ENCODE measurements at regions of chr22 and their contacts with region 1.

Region 1: DNA sequence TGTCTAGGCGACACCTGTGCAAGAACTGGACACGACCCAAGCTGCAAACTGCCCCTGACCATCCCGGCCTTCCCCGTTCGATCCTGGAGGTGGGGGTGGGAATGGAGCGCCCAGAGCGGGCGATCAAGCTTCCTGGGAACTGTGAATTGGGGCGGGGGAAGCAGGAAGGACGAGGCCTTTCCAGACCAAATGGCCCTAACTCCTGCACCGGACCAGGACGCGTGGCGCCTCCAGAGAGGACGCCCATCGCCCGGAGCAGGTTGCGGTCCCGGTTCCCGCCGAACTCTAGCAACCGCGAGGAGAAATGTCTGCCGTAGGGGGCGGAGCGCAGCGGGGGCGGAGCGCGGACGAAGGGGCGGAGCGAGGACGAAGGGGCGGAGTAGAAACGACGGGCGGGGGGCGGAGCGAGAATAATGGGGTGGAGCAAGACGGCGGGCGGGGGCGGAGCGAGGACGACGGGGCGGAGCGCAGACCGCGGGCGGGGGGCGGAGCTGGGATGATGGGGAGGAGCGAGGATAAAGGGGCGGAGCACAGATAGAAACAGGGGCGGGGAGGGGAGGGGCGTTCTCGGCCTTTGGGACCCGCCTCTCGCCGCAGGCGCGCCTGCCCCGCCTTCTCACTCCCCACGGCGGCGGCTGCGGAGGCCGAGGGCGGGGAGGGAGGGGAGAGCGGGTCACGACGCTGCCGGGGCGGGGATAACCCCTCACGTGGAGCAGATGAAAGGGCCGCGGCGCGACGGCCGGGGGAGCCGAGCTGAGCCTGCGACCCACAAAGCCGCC is at the start of gene ZNRF3:
- DNase-seq: peak; percentile 79 to 95 (median 92)
- ATAC-seq: peak; percentile 94
- H3K4me3 ChIP-seq: peak within 1 kb of the TSS; percentile 52 to 77
- H3K4me3 Mint-ChIP-seq: peak within 1 kb of the TSS; percentile 87
- H3K27ac ChIP-seq: no peak within 1 kb of the TSS
- H3K27ac Mint-ChIP-seq: no peak within 1 kb of the TSS
- H3K4me1 ChIP-seq: peaks cover 13% of the 10 kb centered on the region
- H3K4me1 Mint-ChIP-seq: peaks cover 23% of the 10 kb centered on the region
- H3K27me3 ChIP-seq: peaks cover 5 to 9% of the 10 kb centered on the region in 2 experiments
- H3K27me3 Mint-ChIP-seq: peaks cover 27% of the 10 kb centered on the region
- CTCF ChIP-seq: no peak
- total RNA-seq, gene ZNRF3: 0.49 to 0.69 TPM

Region 2: DNA sequence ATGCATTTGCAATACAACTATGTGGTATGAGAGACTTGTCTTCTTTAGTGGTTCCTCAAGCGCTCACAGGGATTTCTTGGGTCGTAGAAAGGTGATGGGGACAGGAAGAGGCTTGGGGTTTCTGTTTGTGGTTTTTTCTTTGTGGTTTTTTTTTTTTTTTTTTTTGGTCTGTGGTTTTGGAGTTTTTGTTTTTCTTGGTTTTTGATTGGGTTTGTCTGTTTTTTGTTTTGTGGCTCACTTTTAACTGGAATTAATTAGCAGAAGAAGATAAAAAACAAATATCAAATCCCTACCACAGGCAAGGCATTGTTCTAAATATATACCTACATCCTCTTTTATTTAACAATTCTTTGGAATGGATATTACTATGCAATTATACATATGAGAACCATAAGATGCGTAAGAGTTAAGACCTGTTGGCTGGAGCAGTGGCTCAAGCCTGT is 208.9 kb before region 1 on chr22:
- CTCF ChIA-PET with region 1: no interaction called
- POLR2A ChIA-PET with region 1: no interaction called
- intact Hi-C with region 1: loop called in 1 of 2 experiments (anchors 5 kb)
- DNase-seq: peak in 5 of 9 experiments; percentile 18 to 87 (median 66)
- ATAC-seq: peak; percentile 95
- H3K4me3 ChIP-seq: no peak overlapping the region
- H3K4me3 Mint-ChIP-seq: peak overlapping the region; percentile 65
- H3K27ac ChIP-seq: no peak overlapping the region
- H3K27ac Mint-ChIP-seq: peak overlapping the region; percentile 93
- H3K4me1 ChIP-seq: peaks cover 23% of the 10 kb centered on the region
- H3K4me1 Mint-ChIP-seq: peaks cover 24% of the 10 kb centered on the region
- H3K27me3 ChIP-seq: peaks cover 26 to 48% of the 10 kb centered on the region in 2 experiments
- H3K27me3 Mint-ChIP-seq: peaks cover 59% of the 10 kb centered on the region
- CTCF ChIP-seq: no peak

Region 3: DNA sequence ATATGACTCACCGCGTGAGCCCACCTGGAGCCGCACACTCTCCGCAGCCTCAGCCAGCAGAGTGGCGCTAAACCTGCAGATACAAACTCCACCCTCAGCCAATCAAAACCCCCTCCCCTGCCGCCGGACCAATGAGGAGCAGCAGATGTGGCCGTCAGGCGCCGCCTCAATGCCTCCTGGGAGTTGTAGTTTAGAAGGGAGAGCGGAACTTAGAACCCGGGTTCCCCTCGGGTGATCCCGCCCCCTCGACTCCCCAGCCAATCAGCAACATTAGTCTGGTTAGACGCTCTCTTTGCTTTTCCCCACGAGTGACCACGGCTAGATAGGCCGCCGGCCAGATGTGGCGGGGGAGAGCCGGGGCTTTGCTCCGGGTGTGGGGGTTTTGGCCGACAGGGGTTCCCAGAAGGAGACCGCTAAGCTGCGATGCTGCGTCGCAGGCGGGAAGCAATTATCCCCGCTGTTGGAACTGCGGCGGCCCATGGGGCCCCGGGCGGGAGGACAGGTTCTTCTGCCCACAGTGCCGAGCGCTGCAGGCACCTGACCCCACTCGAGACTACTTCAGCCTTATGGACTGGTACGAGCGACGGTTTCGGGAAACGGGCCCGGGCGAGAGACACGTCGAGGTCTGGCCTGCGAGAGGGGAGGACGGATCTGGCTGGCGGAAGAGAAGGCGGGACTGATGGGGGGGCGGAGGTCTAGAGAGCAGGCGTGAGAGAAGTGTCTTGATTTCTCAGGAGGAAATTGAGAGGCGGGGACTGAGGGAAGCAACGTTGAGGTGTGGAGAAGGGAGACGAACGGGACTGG is 141.1 kb before region 1 on chr22 and contains the starts of genes CHEK2 and HSCB:
- CTCF ChIA-PET with region 1: no interaction called
- POLR2A ChIA-PET with region 1: no interaction called
- intact Hi-C with region 1: loop called (anchors 1 kb)
- DNase-seq: peak; percentile 94 to 99 (median 96)
- ATAC-seq: peak; percentile 94
- H3K4me3 ChIP-seq: peak within 1 kb of the TSS; percentile 85 to 98
- H3K4me3 Mint-ChIP-seq: peak within 1 kb of the TSS; percentile 88
- H3K27ac ChIP-seq: peak within 1 kb of the TSS; percentile 82 to 94
- H3K27ac Mint-ChIP-seq: peak within 1 kb of the TSS; percentile 92
- H3K4me1 ChIP-seq: peaks cover 13% of the 10 kb centered on the region
- H3K4me1 Mint-ChIP-seq: peaks cover 22% of the 10 kb centered on the region
- H3K27me3 ChIP-seq: no peaks in the 10 kb centered on the region
- H3K27me3 Mint-ChIP-seq: no peaks in the 10 kb centered on the region
- CTCF ChIP-seq: no peak
- total RNA-seq, gene CHEK2: 2.1 to 3.6 TPM
- total RNA-seq, gene HSCB: 4.8 to 5.9 TPM

Region 4: DNA sequence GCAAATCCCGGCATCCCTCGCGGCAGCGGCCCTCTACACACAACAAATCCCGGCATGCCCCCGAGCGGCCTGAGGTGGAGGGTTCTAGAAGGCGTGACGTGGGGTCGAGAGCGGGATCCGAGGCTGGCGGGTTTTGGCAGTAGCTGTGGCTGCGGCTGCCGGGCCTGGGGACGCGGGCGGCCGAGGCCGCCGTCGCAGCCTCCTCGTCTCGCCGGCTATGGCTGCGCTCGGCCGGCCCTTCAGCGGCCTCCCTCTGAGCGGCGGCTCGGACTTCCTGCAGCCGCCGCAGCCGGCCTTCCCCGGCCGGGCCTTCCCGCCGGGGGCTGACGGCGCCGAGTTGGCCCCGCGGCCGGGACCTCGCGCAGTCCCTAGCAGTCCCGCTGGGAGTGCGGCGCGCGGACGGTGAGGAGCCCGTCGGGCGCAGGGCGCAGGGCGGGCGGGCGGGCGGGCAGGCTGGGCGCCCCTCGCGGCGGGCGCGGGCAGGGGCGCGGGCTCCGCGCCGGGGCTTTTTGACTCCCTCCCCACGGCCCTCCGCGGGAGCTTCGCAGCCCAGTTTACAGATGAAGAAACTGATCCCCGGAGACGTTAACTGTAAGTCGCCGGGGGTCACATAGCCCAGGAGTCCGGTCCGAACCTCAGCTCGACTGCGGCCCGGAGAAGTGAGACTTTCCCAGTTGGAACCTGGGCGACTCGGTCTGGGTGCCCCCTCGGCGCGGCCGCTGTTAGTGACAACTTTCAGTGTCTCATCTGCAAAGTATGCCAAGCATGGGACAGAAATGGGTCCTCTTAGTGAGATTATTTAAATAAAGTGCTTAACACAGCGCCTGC is 110.2 kb before region 1 on chr22 and contains the start of gene CCDC117:
- CTCF ChIA-PET with region 1: no interaction called
- POLR2A ChIA-PET with region 1: no interaction called
- intact Hi-C with region 1: loop called (anchors 1 kb)
- DNase-seq: peak; percentile 85 to 96 (median 94)
- ATAC-seq: peak; percentile 94
- H3K4me3 ChIP-seq: peak within 1 kb of the TSS; percentile 60 to 65
- H3K4me3 Mint-ChIP-seq: peak within 1 kb of the TSS; percentile 94
- H3K27ac ChIP-seq: peak within 1 kb of the TSS; percentile 68 to 77
- H3K27ac Mint-ChIP-seq: peak within 1 kb of the TSS; percentile 94
- H3K4me1 ChIP-seq: peaks cover 26% of the 10 kb centered on the region
- H3K4me1 Mint-ChIP-seq: peaks cover 30% of the 10 kb centered on the region
- H3K27me3 ChIP-seq: no peaks in the 10 kb centered on the region
- H3K27me3 Mint-ChIP-seq: no peaks in the 10 kb centered on the region
- CTCF ChIP-seq: peak; percentile 31
- total RNA-seq, gene CCDC117: 13.7 to 15.4 TPM

Region 5: DNA sequence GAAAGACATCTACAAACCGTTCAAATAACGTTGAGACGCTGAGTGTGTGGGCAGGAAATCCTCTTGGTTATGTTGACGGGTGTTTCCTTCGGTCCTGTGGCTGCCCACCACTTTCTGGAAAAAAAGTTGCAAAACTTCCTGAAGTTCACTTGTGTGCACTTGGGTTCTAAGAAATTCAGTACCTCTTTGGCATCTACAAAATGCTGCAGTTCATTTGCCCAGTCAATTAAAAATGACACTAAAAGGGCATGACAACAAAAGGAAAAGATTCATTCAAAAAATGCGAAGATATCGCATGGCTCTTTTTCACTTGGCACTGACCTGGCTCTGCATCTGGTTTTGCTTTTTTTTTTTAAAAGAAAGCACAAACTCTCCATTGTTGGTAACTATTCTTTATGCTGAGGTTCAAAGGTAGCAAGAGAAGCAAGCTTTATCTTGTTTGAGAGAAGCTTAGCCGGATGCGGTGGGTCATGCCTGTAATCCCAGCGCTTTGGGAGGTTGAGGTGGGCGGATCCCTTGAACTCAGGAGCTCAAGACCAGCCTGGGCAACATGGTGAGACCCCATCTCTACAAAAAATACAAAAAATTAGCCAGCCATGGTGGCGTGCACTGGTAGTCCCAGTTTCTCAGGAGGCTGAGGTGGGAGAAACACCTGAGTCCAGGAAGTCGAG is 72.1 kb before region 1 on chr22:
- CTCF ChIA-PET with region 1: no interaction called
- POLR2A ChIA-PET with region 1: no interaction called
- intact Hi-C with region 1: no loop called
- DNase-seq: peak in 6 of 9 experiments; percentile 31 to 80 (median 52)
- ATAC-seq: peak; percentile 51
- H3K4me3 ChIP-seq: peak overlapping the region; percentile 25 to 46
- H3K4me3 Mint-ChIP-seq: peak overlapping the region; percentile 82
- H3K27ac ChIP-seq: peak overlapping the region; percentile 14 to 64
- H3K27ac Mint-ChIP-seq: peak overlapping the region; percentile 92
- H3K4me1 ChIP-seq: peaks cover 72% of the 10 kb centered on the region
- H3K4me1 Mint-ChIP-seq: peaks cover 76% of the 10 kb centered on the region
- H3K27me3 ChIP-seq: no peaks in the 10 kb centered on the region
- H3K27me3 Mint-ChIP-seq: no peaks in the 10 kb centered on the region
- CTCF ChIP-seq: no peak

Region 6: DNA sequence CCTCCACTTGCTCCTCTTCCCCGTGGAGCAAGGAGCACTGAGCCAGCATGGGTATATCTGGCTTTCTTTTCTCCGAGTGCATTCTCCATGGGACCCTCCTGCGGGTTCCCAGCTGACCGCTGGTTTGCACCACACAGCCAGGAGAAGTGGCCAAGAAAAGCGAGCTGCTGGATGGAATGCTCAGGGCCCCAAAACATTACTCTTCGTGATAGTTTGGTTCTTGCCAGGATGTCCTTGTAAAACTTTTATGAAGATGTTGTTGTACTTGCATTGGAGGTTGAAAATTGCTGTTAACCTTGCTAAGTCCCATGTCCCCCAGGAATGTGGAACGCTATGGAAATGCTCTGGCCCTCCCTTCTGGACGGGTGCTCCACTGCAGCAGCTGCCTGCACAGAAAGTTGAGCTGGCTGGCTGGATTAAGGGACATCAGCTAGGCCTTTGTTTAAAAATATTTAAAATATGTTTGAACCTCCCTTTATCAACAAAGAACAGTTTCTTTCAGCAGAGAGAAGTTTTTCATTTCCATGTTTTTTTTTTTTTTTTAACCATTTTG is 69.0 kb after region 1 on chr22:
- CTCF ChIA-PET with region 1: no interaction called
- POLR2A ChIA-PET with region 1: no interaction called
- intact Hi-C with region 1: loop called in 1 of 2 experiments (anchors 10 kb)
- DNase-seq: no peak
- ATAC-seq: no peak
- H3K4me3 ChIP-seq: no peak overlapping the region
- H3K4me3 Mint-ChIP-seq: no peak overlapping the region
- H3K27ac ChIP-seq: no peak overlapping the region
- H3K27ac Mint-ChIP-seq: no peak overlapping the region
- H3K4me1 ChIP-seq: peaks cover 20% of the 10 kb centered on the region
- H3K4me1 Mint-ChIP-seq: peaks cover 17% of the 10 kb centered on the region
- H3K27me3 ChIP-seq: peaks cover 23% of the 10 kb centered on the region in 2 experiments
- H3K27me3 Mint-ChIP-seq: peaks cover 76% of the 10 kb centered on the region
- CTCF ChIP-seq: no peak

Region 7: GRCh38 chr22:29072193-29072978 is 189.3 kb after region 1 on chr22:
- CTCF ChIA-PET with region 1: no interaction called
- POLR2A ChIA-PET with region 1: no interaction called
- intact Hi-C with region 1: loop called (anchors 1 kb)
- DNase-seq: peak; percentile 55 to 87 (median 78)
- ATAC-seq: peak; percentile 96
- H3K4me3 ChIP-seq: peak overlapping the region; percentile 39 to 61
- H3K4me3 Mint-ChIP-seq: peak overlapping the region; percentile 79
- H3K27ac ChIP-seq: no peak overlapping the region
- H3K27ac Mint-ChIP-seq: no peak overlapping the region
- H3K4me1 ChIP-seq: peaks cover 27% of the 10 kb centered on the region
- H3K4me1 Mint-ChIP-seq: peaks cover 23% of the 10 kb centered on the region
- H3K27me3 ChIP-seq: peaks cover 14 to 18% of the 10 kb centered on the region in 2 experiments
- H3K27me3 Mint-ChIP-seq: peaks cover 46% of the 10 kb centered on the region
- CTCF ChIP-seq: no peak

Measured in CD8-positive, alpha-beta T cell (primary cell).